Posterior vena cava (tissue), 2 donors: ENCODE measurements at regions of chr19 and their contacts with region 1.

Region 1: DNA sequence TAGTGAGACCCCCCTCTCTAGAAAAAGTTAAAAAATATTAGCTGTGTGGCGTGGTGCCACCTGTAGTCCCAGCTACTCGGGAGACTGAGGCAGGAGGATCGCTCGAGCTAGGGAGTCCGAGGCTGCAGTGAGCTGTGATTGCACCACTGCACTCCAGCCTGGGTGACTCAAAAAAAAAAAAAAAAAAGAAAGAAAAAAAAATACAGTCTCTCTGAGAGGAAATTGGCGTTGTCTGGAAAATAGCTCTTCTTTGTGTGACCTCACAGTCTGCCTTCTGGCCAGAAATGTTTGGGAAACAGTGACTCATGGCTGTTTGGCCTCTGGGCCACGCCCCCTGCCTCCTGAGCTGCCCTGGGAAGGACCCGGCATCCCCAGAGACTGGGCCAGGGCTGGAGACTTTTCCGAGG is 10.7 kb downstream of the MARCHF2 start:
- DNase-seq: peak; percentile 97

Region 2: GRCh38 chr19:8505680-8506401 is 82.0 kb after region 1 on chr19:
- intact Hi-C with region 1: loop called in 1 of 2 experiments (anchors 10 kb)
- DNase-seq: peak; percentile 93